ENCODE measurements at regions of chr17 and their contacts with region 1.

Region 1: DNA sequence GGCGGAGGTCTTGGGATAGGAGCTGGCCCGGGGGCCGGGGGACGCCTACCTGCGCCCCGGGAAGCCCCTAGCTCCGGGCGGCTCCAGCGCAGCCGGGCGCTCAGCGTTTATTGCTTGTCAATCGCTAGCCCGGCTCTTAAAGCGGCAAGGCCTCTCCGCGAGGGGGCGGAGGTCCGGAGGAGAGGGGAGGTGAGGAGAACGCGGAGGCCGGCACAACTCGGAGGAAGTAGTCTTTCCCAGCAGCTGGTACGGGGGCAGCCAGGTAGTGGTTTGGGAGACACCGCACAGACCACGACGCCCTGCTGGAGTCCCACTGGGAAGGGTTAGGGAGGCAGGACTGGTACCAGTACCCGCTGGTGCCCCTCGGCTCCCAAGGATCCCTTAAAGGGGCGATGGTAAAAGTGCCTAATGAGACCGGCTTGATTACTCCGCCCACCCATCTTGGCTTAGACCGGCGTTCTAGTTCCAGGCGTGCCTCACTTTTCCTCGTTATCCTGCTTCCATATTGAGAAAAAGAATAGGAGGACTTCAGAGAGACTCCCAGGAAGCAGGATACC is at the start of gene MPP2:
- DNase-seq: peak; percentile 71 to 80
- ATAC-seq: peak; percentile 49 to 77
- H3K4me3 ChIP-seq: peak within 1 kb of the TSS; percentile 46
- H3K27ac ChIP-seq: peak within 1 kb of the TSS; percentile 23 to 74; a peak in 4 of 6 replicates
- H3K4me1 ChIP-seq: peaks cover 24% of the 10 kb centered on the region
- CTCF ChIP-seq: no peak
- EP300 ChIP-seq: no peak
- POLR2A ChIP-seq: no peak
- RAD21 ChIP-seq: no peak
- polyA plus RNA-seq, gene MPP2: 3.8 and 4.1 TPM in 2 replicates

Region 2: DNA sequence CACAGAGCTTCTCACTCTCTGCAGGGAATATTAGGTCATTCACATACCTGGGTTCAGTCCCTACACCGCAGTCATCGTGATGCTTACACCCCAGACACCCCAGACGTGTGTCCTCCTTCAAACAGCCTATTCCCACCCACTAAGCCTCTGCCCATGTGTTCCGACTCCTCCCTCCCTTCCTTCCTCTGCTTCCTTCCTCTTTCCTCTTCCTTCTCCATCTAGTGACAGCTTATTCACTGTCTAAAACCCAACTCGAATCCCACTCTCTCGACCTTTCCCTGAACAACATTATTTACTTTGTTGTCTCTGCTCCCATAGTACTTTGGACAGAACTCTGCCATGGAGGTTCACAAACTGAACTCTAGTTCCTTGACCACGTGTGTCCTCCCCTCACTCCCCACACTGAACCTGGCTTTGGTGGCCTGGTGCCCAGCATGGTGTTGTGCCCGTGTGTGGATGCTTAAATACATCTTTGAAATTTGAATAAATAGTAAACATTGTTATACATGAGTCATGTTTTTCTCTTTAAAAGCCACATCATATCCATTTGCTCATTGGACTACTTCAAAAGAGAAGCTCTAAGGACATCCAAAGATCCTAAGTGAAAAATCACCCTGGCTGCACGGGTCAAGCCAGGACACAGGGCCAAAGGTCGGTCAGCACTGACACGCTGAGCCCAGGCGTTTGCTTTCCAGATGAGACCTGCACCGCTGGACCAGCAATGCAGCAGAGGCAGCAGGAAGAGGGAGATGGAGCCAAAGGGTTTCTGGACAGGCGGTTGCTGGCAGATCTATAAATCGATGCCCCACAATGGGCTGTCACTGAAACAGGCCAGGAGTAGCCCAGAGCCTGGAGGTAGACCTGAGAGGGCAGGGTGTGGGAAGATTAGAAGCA is 1021.0 kb before region 1 on chr17:
- CTCF ChIA-PET with region 1: no interaction called
- POLR2A ChIA-PET with region 1: no interaction called
- DNase-seq: no peak
- ATAC-seq: no peak
- H3K4me3 ChIP-seq: no peak overlapping the region
- H3K27ac ChIP-seq: no peak overlapping the region
- H3K4me1 ChIP-seq: peaks cover 6% of the 10 kb centered on the region; the same call in 2 of the 3 replicates
- CTCF ChIP-seq: no peak
- EP300 ChIP-seq: no peak
- POLR2A ChIP-seq: no peak
- RAD21 ChIP-seq: no peak

Region 3: GRCh38 chr17:43861024-43861621 is 46.4 kb before region 1 on chr17:
- CTCF ChIA-PET with region 1: interaction called, 12 read pairs
- POLR2A ChIA-PET with region 1: no interaction called
- DNase-seq: no peak
- ATAC-seq: no peak
- H3K4me3 ChIP-seq: no peak overlapping the region
- H3K27ac ChIP-seq: no peak overlapping the region; a peak in 1 of 6 replicates
- H3K4me1 ChIP-seq: peaks cover 5% of the 10 kb centered on the region; the same call in 1 of the 3 replicates
- CTCF ChIP-seq: no peak
- EP300 ChIP-seq: no peak
- POLR2A ChIP-seq: no peak
- RAD21 ChIP-seq: no peak

Region 4: DNA sequence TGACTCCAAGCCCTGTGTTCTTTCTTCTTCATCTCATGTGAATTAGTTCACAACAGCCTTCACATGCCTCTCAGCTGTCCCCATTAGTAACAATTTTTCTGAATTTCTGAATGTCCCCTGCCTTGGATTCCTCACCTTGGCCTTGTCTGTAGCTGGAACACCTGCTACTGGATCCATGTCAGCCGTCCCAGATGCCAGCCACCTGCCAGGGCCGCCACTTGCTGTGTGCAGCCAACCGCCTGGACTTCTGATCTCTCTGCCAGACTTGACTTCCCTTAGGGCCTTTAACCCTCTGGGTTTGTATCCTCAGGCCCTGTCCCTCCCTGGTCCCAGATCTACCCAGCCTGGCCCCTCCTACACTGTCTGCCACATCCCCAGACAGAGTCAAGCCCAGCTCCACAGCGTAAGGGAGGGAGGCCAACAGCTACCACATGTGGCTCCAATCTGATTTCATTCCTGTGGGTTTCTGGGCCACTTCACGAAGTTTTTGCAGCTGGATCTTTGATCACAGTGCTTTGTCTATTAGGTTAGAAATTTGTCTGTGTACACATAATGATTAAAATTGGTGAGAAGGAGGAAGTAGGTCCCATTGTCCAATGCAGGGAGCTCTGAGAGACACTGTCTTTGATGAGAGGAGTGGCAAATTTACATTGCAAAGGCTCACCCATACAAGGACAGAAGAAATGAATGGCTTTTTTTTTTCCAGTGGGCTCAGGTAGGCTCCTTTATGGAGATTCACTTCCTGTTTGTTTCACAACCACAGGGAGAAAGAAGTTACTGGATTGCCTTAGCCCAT is 15.5 kb before region 1 on chr17:
- CTCF ChIA-PET with region 1: interaction called, 189 read pairs
- POLR2A ChIA-PET with region 1: no interaction called
- DNase-seq: no peak
- ATAC-seq: no peak
- H3K4me3 ChIP-seq: no peak overlapping the region
- H3K27ac ChIP-seq: no peak overlapping the region
- H3K4me1 ChIP-seq: no peaks in the 10 kb centered on the region
- CTCF ChIP-seq: no peak
- EP300 ChIP-seq: no peak
- POLR2A ChIP-seq: no peak
- RAD21 ChIP-seq: no peak

Region 5: GRCh38 chr17:43927060-43927864 is 19.8 kb after region 1 on chr17:
- CTCF ChIA-PET with region 1: interaction called, 94 read pairs
- POLR2A ChIA-PET with region 1: no interaction called
- DNase-seq: no peak
- ATAC-seq: no peak
- H3K4me3 ChIP-seq: no peak overlapping the region
- H3K27ac ChIP-seq: no peak overlapping the region
- H3K4me1 ChIP-seq: peaks cover 14% of the 10 kb centered on the region
- CTCF ChIP-seq: no peak
- EP300 ChIP-seq: no peak
- POLR2A ChIP-seq: no peak
- RAD21 ChIP-seq: no peak

Region 6: DNA sequence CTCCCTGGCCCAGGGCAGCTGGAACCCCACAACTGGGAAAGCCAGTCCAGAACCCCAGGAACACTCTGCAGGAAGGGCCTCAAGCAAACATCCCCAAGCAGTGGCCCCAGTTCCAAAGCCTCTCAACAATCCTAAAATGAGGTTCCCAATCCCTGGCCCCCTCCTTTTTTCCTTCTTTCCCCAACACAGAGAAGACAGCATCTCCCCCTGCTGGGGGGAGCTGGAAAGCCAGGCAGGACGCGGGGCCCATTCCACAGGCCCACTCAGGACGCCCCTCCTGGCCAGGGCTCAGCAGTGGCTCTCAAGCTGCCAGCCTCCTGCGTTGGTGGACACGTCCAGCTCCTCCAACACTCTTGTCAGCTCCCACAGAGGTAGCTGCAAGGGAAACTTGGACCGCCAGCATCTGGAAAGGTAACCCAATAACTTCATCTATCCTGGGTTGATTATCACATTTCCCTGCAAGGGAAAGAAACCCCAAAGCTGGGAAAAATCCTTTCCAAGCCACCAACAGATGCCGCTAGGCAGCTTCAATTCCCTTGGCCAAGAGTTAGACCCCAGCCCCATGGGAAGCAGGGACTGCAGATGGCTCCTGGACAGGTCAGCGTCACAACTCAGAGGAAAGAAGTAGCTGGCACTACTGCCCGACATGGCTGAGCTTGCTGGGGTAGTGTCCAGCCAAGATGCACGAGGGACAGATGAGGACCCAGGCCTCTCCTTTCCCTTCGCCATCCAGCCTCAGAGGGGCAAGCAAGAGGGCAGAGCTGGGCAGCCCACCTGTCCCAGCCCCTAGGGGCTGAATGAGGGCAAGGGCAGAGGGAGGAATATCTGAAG is 208.3 kb after region 1 on chr17:
- CTCF ChIA-PET with region 1: no interaction called
- POLR2A ChIA-PET with region 1: no interaction called
- DNase-seq: peak; percentile 57 to 81
- ATAC-seq: peak; percentile 35 to 67; a peak in 3 of 6 replicates
- H3K4me3 ChIP-seq: no peak overlapping the region
- H3K27ac ChIP-seq: peak overlapping the region in 1 of 2 experiments; percentile 13; a peak in 1 of 6 replicates
- H3K4me1 ChIP-seq: peaks cover 21% of the 10 kb centered on the region
- CTCF ChIP-seq: peak; percentile 87
- EP300 ChIP-seq: no peak
- POLR2A ChIP-seq: no peak
- RAD21 ChIP-seq: peak; percentile 88